ENCODE measurements at regions of chr21 and their contacts with region 1.

Region 1: DNA sequence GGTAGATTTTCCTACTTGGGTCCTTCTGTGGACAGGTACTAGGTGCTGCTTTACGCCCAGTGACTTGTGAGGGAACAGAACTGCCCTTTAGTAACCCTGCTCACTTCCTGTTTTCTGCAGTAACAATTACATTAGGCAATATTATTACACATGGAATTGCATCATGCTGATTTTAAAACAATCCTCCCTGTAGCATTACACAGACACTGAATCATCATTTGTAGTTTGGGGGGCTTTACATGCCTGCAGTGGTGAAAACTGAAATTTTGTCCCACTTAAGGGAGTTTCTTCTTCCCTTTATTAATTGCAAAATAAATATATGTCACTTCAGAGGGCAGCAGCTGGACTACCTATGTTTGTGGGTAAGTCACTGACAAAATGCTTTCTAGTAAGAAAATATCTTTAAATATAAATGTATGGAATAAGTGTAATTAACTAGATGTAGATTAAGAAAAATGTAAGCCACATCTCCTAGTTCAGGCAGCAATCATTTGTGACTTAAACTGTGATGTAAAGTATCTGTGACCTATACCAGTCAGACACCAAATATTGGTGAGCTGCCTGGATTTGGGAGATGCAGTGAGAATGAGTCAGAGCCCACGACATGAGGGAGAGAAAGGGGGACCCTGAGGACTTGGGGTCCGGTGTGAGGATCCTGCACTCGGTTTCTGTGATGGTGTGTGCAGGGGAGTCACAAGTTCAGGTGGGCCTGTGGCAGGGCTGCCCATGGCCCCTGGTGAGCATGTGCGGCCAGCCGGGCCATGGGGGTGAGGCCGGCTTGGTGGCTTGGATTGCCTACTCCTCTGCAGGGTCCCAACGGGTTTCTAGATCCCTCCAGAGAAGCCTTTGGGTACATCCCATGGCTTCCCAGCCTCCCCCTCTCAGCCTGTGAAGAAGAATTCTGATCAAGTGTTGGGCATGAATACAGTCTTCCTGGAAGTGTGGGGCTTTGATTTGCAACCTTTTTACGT is 19.2 kb upstream of the ABCG1 start:
- DNase-seq: no peak
- ATAC-seq: peak; percentile 84
- H3K4me3 Mint-ChIP-seq: peak overlapping the region; percentile 46
- H3K27ac Mint-ChIP-seq: no peak overlapping the region
- H3K4me1 Mint-ChIP-seq: peaks cover 26% of the 10 kb centered on the region
- H3K27me3 Mint-ChIP-seq: no peaks in the 10 kb centered on the region
- CTCF ChIP-seq: no peak

Region 2: GRCh38 chr21:42179316-42179715 is 20.5 kb before region 1 on chr21:
- CTCF ChIA-PET with region 1: no interaction called
- POLR2A ChIA-PET with region 1: no interaction called
- intact Hi-C with region 1: no loop called
- DNase-seq: no peak
- ATAC-seq: no peak
- H3K4me3 Mint-ChIP-seq: no peak overlapping the region
- H3K27ac Mint-ChIP-seq: no peak overlapping the region
- H3K4me1 Mint-ChIP-seq: no peaks in the 10 kb centered on the region
- H3K27me3 Mint-ChIP-seq: no peaks in the 10 kb centered on the region
- CTCF ChIP-seq: no peak

Region 3: GRCh38 chr21:42227909-42228708 is 28.3 kb after region 1 on chr21:
- CTCF ChIA-PET with region 1: no interaction called
- POLR2A ChIA-PET with region 1: no interaction called
- intact Hi-C with region 1: loop called (anchors 1 kb)
- DNase-seq: peak; percentile 78
- ATAC-seq: peak; percentile 96
- H3K4me3 Mint-ChIP-seq: peak overlapping the region; percentile 45
- H3K27ac Mint-ChIP-seq: peak overlapping the region; percentile 70
- H3K4me1 Mint-ChIP-seq: peaks cover 63% of the 10 kb centered on the region
- H3K27me3 Mint-ChIP-seq: no peaks in the 10 kb centered on the region
- CTCF ChIP-seq: no peak

Region 4: DNA sequence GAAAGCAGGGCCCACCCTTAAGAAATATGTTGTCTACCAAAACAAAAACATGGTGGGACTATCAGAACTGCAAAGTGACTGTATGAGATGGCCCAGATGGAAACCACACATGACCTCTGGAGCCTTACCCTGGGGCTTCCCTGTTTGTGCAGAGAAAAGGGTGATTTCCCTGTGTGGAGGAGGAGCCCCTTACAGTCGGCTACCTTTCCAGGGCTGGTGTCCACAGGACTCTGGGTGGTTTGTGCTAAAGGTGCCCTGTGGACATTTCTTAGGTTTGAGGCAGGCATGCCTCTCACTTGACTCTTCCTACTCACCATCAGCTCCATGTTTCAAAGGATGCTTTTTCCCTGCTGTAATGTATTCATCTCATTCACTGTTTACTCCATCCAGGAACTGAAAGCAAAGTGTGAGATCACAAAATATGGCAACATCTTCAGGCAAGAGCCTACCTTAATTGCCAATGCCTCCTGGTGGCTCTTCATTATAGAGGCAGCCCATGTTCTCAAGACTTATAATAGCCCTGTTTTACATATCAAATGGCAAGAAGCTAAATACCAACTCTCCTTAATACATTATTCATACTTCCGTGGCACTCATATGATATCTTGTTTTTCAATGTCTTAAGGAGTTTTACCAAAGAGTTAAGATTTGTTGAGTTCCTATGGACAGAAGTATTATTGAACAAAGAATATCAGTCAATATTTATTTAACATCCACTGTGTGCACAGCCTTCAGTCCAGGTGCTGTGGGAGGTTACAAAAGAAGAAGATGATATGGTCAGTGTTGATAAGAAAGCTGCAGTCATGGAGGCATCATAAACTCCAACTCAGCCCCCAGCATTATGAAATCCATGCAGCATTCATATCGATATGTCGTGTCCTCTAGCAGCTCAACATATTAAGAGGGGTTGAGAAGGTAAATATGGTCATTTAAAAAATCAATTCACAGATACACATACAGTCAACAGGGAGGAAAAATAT is 130.9 kb after region 1 on chr21:
- CTCF ChIA-PET with region 1: no interaction called
- POLR2A ChIA-PET with region 1: no interaction called
- intact Hi-C with region 1: no loop called
- DNase-seq: no peak
- ATAC-seq: no peak
- H3K4me3 Mint-ChIP-seq: no peak overlapping the region
- H3K27ac Mint-ChIP-seq: no peak overlapping the region
- H3K4me1 Mint-ChIP-seq: no peaks in the 10 kb centered on the region
- H3K27me3 Mint-ChIP-seq: peaks cover 14% of the 10 kb centered on the region
- CTCF ChIP-seq: no peak

Measured in activated B cell treated with CpG ODN at 0.5 μM for 24 hours (primary cell).